ENCODE measurements at regions of chr2 and their contacts with region 1.

Region 1: GRCh38 chr2:240900141-240900860 is 4.3 kb upstream of the MAB21L4 start:
- DNase-seq: no peak
- H3K4me3 ChIP-seq: no peak overlapping the region
- H3K27ac ChIP-seq: no peak overlapping the region
- H3K4me1 ChIP-seq: peaks cover 51% of the 10 kb centered on the region
- H3K27me3 ChIP-seq: no peaks in the 10 kb centered on the region
- CTCF ChIP-seq: no peak

Region 2: DNA sequence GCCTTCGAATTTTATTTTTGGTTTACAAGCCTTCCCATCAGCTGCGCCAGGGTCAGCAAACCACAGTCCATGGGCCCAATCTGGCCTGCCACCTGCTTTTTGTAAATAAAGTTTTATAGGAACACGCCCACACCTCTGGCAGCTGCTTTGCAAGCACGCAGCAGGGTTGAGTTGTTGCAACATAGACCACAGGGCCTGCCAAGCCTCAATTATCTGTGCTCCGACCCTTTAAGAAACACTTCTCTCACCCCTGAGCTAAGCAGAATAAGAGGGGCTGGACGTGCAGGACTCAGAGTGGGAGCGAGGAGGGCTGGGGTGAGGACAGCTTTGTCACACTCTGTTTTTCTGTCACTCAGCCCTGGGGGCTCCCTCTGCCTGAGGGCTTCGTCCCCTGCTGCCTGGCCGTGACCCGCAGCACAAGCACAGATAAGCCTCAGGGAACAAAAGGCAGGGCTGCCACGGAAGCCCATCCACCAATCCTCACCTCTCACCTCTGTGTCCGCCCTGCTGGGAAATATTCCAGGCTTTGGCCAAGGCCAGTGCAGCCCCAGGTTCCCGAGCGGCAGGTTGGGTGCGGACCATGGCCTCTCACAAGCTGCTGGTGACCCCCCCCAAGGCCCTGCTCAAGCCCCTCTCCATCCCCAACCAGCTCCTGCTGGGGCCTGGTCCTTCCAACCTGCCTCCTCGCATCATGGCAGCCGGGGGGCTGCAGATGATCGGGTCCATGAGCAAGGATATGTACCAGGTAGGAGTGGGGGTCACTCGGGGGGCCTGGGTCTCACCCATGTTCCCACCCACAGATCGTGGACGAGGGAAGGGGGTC is 31.8 kb before region 1 on chr2 and contains the start of gene AGXT:
- CTCF ChIA-PET with region 1: no interaction called
- POLR2A ChIA-PET with region 1: no interaction called
- intact Hi-C with region 1: no loop called
- DNase-seq: peak in 1 of 2 experiments; percentile 76
- H3K4me3 ChIP-seq: no peak within 1 kb of the TSS
- H3K27ac ChIP-seq: no peak within 1 kb of the TSS
- H3K4me1 ChIP-seq: peaks cover 14% of the 10 kb centered on the region
- H3K27me3 ChIP-seq: no peaks in the 10 kb centered on the region
- CTCF ChIP-seq: no peak
- total RNA-seq, gene AGXT: not detected in 2 replicates

Region 3: DNA sequence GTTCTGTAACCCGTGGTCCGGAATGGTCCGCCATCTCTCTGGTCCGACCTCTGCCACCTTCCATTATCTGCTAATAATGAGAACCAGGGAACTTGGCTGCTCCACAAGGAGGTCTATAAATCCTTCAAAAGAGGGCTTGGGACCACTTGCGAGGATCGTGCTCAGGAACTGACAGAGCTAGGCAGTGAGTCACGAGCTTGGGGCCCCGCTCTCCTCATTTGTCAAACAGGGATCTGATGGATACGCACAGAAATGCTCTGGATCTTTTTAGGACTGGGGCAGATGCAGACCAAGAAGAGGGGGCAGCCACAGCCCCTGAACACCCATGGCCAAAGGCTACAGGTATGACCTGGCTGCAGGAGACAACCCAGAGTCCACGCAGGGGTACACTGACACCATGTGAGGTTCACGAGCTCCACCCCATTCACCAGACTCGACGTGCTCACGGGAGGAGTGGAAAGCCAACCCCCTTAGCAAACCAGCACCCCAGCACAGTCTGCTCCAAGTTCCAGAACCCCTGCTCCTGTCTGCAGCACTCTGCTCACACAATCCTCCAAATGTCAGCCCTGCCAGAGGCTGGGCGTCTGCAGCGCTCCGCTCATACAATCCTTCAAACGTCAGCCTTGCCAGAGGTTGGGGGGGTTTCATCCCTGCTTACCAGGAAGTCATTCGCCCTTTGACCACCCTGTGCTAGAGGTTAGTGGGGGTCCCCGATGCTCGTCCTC is 333.9 kb after region 1 on chr2:
- CTCF ChIA-PET with region 1: no interaction called
- POLR2A ChIA-PET with region 1: interaction called, 15 read pairs
- intact Hi-C with region 1: no loop called
- DNase-seq: no peak
- H3K4me3 ChIP-seq: no peak overlapping the region
- H3K27ac ChIP-seq: no peak overlapping the region
- H3K4me1 ChIP-seq: no peaks in the 10 kb centered on the region
- H3K27me3 ChIP-seq: no peaks in the 10 kb centered on the region
- CTCF ChIP-seq: no peak

Measured in PC-9 (cell line).